ENCODE measurements at regions of chr12 and their contacts with region 1.

Region 1: GRCh38 chr12:104057771-104058197 is 6.5 kb upstream of the HCFC2 start:
- DNase-seq: no peak
- ATAC-seq: no peak

Region 2: GRCh38 chr12:103997286-103997900 is 60.4 kb before region 1 on chr12:
- intact Hi-C with region 1: loop called (anchors 5 kb)
- DNase-seq: peak; percentile 74
- ATAC-seq: peak; percentile 89